ENCODE measurements at regions of chr10 and their contacts with region 1.

Region 1: DNA sequence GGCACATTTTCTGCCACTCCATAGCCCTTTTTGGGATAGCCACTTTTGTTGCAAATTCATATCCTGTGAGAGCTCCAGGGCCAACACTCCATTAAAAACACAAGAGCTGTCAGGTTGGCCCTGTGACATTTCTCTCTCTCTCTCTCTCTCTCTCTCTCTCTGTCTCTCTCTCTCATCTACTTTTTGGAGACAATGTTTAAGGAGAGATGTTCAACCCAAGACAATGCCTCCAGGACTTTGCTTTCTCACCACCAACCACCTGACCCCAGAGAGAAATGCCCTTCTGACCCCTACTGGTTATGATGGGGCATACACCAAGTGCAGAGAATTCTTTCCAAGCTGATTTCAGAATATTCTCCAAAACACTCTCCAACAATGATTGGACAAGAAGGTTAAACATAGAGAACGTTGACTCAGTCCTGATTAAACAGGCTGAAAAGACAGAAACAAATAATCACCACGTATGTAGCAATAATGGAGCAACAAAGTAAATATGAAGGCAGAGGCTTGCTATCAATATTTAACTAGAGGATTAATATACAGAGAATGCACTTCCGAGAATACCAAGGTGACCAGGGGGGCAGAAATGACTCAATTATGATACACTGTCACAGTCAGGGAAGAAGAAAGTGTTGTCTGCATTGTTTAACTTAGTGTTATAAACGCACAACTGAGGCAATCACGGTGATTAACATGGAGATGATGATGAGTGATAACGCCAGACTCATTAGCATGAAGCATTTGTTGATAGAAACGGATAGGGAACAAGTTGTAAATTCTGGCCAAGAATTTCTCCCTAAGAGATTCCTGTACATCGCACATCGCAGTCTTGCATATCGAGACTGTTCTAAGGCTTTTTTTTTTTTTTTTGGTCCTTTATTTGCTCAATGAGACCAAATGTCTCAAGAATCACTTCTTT is 178.5 kb downstream of the NRP1 start:
- DNase-seq: no peak
- ATAC-seq: peak in 1 of 4 donors; percentile 53
- H3K4me3 ChIP-seq: no peak overlapping the region
- H3K27ac ChIP-seq: peak overlapping the region in 6 of 12 donors; percentile 29 to 88 (median 70)
- H3K4me1 ChIP-seq: peaks cover 0 to 54% (median 15%) of the 10 kb centered on the region in 12 donors
- H3K27me3 ChIP-seq: no peaks in the 10 kb centered on the region
- CTCF ChIP-seq: peak; percentile 22 to 54 (median 42)
- POLR2A ChIP-seq: no peak

Region 2: GRCh38 chr10:32795598-32796183 is 360.3 kb before region 1 on chr10:
- intact Hi-C with region 1: loop called in 1 of 10 experiments (anchors 5 kb)
- DNase-seq: no peak
- ATAC-seq: no peak
- H3K4me3 ChIP-seq: no peak overlapping the region
- H3K27ac ChIP-seq: no peak overlapping the region
- H3K4me1 ChIP-seq: no peaks in the 10 kb centered on the region
- H3K27me3 ChIP-seq: no peaks in the 10 kb centered on the region
- CTCF ChIP-seq: peak; percentile 55 to 89 (median 73)
- POLR2A ChIP-seq: no peak

Region 3: DNA sequence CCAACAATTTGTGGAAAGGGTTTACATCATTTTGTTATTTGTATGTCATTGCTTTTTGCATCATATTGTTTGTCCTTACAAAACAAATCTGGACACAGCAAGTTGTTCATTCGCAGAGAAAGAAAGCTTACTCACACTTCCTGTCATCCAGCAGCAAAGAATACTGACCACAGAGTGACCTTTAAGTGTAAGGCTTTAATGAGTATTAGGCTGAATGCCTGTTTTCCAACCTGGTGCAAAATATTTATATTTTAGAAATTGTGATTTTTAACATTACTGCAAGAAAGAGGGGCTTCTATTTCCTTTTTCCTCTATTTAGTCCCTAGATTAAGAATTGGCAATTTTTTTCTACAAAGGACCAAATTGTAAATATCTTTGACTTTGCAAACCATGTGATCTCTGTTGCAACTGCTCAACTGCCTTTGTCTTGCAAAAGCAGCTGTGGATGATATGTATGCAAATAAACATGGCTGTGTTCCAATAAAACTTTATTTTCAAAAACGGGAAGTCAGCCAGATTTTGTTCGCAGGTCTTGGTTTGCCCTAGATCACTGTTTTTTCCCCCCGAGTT is 170.1 kb before region 1 on chr10:
- intact Hi-C with region 1: no loop called
- DNase-seq: no peak
- ATAC-seq: peak in 2 of 4 donors; percentile 17 to 42
- H3K4me3 ChIP-seq: no peak overlapping the region
- H3K27ac ChIP-seq: peak overlapping the region in 6 of 12 donors; percentile 24 to 78 (median 48)
- H3K4me1 ChIP-seq: peaks cover 3 to 57% (median 24%) of the 10 kb centered on the region in 12 donors
- H3K27me3 ChIP-seq: no peaks in the 10 kb centered on the region
- CTCF ChIP-seq: no peak
- POLR2A ChIP-seq: no peak

Region 4: GRCh38 chr10:33025039-33025438 is 130.9 kb before region 1 on chr10:
- intact Hi-C with region 1: loop called in 2 of 10 experiments (anchors 10 kb)
- DNase-seq: no peak
- ATAC-seq: no peak
- H3K4me3 ChIP-seq: no peak overlapping the region
- H3K27ac ChIP-seq: no peak overlapping the region
- H3K4me1 ChIP-seq: peaks cover 0 to 17% (median 2%) of the 10 kb centered on the region in 12 donors
- H3K27me3 ChIP-seq: no peaks in the 10 kb centered on the region
- CTCF ChIP-seq: no peak
- POLR2A ChIP-seq: no peak

Region 5: DNA sequence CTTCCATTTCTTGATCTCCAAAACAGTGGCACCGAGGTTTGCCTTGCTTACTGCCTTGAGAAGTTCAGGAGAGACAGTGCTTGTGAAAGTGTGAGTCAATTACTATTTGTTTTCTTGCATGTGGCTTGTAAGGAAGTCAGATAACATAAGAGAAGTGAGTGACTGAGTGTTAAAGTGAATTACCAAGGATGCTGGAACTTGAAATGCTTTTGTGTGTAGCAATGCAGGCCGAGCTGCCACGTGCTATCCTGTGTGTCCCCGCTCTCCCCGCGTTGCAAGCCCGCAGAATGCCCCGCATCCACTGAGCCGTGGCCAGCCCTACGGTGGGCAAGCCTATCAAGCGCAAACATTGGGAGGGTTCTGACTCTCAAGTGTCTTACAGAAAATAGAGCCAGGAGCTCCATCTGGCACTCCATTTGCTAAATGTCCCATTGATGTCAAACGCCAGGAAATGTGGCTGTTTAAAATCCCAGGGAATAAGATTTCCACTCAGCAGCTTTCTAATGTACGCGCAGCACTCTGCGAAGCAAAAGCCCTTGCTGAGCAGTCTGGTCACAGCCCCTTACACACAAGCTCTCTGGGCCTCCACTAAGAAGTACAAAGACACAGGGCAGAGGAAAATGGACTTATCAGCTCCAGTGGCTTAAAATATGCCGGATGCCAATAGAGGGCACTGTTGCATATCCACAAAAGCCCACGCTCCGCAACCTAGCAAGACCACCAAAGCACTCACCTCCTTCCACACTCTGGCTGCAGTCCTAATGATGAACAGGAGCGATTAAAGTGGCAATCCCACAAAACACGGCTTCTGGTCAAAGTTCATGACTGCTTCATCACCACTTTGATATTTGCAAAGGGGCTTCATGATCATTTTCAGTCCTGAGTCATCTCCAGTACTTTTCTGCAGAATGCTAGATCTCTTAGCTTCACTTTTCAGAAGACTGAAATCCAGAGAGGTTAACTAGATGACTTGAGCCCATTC is 40.0 kb before region 1 on chr10:
- intact Hi-C with region 1: loop called in 2 of 10 experiments (anchors 2 to 5 kb)
- DNase-seq: peak in 2 of 5 donors; percentile 29 to 44
- ATAC-seq: peak in 3 of 4 donors; percentile 41 to 67 (median 57)
- H3K4me3 ChIP-seq: no peak overlapping the region
- H3K27ac ChIP-seq: peak overlapping the region in 3 of 12 donors; percentile 20 to 73 (median 54)
- H3K4me1 ChIP-seq: peaks cover 0 to 67% (median 12%) of the 10 kb centered on the region in 12 donors
- H3K27me3 ChIP-seq: no peaks in the 10 kb centered on the region
- CTCF ChIP-seq: peak; percentile 39 to 71 (median 56)
- POLR2A ChIP-seq: no peak

Region 6: DNA sequence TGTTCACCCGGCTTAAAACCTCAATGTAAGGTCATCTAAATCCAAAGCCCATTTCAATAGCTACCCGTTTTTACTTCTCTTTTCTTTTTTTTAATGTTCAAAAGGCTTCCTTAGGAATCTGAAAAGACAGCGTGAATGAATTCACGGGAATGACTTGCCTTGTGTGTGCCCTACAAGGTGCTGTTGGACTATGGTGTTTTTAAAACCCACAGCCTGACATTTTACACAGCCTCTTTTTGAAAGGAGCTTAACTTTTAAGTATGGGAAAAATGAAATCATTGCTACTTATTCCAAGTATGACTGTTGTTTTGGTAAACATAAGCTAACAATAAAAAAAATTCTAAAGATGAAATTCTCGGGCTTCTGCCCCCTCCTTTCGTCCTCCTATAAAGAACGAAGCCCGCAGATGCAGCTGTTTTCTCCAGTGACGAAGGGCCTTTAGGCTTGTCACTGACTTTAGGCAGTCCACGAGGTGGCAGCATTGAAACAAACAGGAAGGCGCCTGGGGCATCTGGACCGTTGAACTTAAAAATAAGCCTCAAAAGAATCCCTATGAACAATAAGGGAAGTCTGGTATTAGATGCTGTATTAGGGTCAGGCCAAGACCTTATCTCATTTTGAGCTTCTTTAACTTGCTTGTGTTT is 37.2 kb after region 1 on chr10:
- intact Hi-C with region 1: no loop called
- DNase-seq: peak; percentile 83 to 90 (median 85)
- ATAC-seq: peak; percentile 73 to 86 (median 82)
- H3K4me3 ChIP-seq: no peak overlapping the region
- H3K27ac ChIP-seq: peak overlapping the region; percentile 25 to 75 (median 52)
- H3K4me1 ChIP-seq: peaks cover 4 to 57% (median 41%) of the 10 kb centered on the region in 12 donors
- H3K27me3 ChIP-seq: no peaks in the 10 kb centered on the region
- CTCF ChIP-seq: peak; percentile 66 to 95 (median 83)
- POLR2A ChIP-seq: no peak